ENCODE measurements at regions of chr17 and their contacts with region 1.

Region 1: GRCh38 chr17:50541716-50542688 is 5.0 kb upstream of the SPATA20 start:
- DNase-seq: no peak
- ATAC-seq: peak; percentile 92
- H3K4me3 ChIP-seq: peak overlapping the region; percentile 55
- H3K27ac ChIP-seq: no peak overlapping the region
- H3K4me1 ChIP-seq: peaks cover 10% of the 10 kb centered on the region
- H3K27me3 ChIP-seq: no peaks in the 10 kb centered on the region
- CTCF ChIP-seq: peak; percentile 18 to 39 (median 26); a peak in 3 of 6 replicates
- EP300 ChIP-seq: no peak
- POLR2A ChIP-seq: peak; percentile 61
- RAD21 ChIP-seq: no peak

Region 2: DNA sequence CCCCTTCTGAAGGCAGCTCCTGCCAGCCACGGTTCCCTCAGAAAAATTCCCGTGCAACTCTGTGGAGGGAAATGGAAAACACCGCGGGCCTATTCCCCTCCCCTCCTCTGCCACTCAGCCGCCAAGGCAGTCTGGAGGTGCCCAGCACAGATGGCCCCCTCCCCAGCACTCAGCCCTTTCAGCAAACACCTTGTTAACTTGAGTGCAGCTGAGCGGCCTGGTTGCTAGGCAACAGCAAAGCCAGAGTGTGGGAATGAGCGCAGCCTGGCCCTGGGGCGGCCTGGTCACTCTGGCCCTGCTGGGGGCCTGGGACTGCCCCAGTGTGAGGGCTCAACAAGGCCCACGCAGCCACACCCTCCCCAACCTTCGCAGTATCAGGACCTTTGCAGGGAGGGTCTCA is 51.3 kb after region 1 on chr17:
- CTCF ChIA-PET with region 1: interaction called, 3 read pairs
- POLR2A ChIA-PET with region 1: no interaction called
- RAD21 ChIA-PET with region 1: no interaction called
- SMC1A ChIA-PET with region 1: no interaction called
- in situ Hi-C with region 1: loop called (anchors 5 kb)
- intact Hi-C with region 1: no loop called
- DNase-seq: no peak
- ATAC-seq: no peak
- H3K4me3 ChIP-seq: no peak overlapping the region
- H3K27ac ChIP-seq: no peak overlapping the region
- H3K4me1 ChIP-seq: no peaks in the 10 kb centered on the region
- H3K27me3 ChIP-seq: no peaks in the 10 kb centered on the region; a peak in 2 of 4 replicates
- CTCF ChIP-seq: no peak
- EP300 ChIP-seq: no peak
- POLR2A ChIP-seq: no peak
- RAD21 ChIP-seq: no peak

Region 3: GRCh38 chr17:50649042-50649904 is 107.3 kb after region 1 on chr17:
- CTCF ChIA-PET with region 1: no interaction called
- POLR2A ChIA-PET with region 1: no interaction called
- RAD21 ChIA-PET with region 1: no interaction called
- SMC1A ChIA-PET with region 1: no interaction called
- in situ Hi-C with region 1: no loop called
- intact Hi-C with region 1: no loop called
- DNase-seq: no peak
- ATAC-seq: 0 out of 3 replicates have a peak, but pooled peaks have one; percentile 19
- H3K4me3 ChIP-seq: no peak overlapping the region
- H3K27ac ChIP-seq: no peak overlapping the region
- H3K4me1 ChIP-seq: no peaks in the 10 kb centered on the region
- H3K27me3 ChIP-seq: no peaks in the 10 kb centered on the region
- CTCF ChIP-seq: no peak
- EP300 ChIP-seq: no peak
- POLR2A ChIP-seq: no peak
- RAD21 ChIP-seq: no peak

Region 4: DNA sequence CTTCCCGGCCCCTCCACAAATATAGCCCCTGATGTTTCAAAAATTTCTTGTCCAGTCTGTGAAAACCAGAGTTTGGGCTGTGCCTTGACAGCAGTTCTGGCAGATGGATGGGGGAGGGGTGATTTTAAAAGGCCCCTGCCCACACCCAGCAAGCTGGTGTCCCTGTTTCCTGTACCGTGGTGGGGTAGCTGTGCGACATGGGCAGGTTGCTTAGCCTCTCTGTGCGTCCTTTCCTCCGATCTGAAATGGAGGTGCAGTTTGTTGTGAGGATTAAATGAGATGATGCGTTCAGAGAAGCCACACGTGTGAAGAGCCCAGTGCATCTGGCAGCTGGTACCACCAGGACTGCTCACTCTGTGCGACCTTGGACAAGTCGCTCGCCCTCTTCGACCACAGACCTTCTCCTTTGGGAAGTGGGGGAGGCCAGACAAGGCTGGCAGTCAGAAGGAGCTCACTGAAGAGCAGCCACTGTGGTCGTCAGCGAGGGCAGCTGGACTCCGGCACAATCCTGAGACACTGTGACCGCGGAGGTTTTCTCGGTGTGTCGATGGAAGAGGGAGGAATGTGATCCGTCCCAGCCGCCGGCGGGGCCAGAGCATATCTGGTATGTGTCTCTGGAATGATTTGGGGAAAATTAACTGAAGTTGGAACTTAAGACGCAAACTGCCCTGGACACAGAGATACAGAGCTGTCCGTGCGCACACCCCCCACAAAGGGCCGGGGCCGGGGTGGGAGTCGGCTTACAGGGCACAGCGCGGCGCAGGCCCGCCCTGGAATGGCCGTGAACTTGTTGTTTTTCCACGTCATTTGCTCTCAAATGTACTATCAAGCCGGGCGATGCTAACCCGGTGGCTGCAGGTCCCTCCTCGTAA is 292.7 kb after region 1 on chr17:
- CTCF ChIA-PET with region 1: no interaction called
- POLR2A ChIA-PET with region 1: no interaction called
- RAD21 ChIA-PET with region 1: no interaction called
- SMC1A ChIA-PET with region 1: no interaction called
- in situ Hi-C with region 1: loop called (anchors 5 kb)
- intact Hi-C with region 1: no loop called
- DNase-seq: no peak
- ATAC-seq: no peak
- H3K4me3 ChIP-seq: no peak overlapping the region
- H3K27ac ChIP-seq: no peak overlapping the region
- H3K4me1 ChIP-seq: peaks cover 4% of the 10 kb centered on the region; the same call in 1 of the 2 replicates
- H3K27me3 ChIP-seq: peaks cover 2 to 4% of the 10 kb centered on the region in 2 experiments; a peak in 3 of 4 replicates
- CTCF ChIP-seq: no peak
- EP300 ChIP-seq: no peak
- POLR2A ChIP-seq: no peak
- RAD21 ChIP-seq: no peak